CD4-positive, alpha-beta T cell (primary cell): ENCODE measurements at regions of chr2 and their contacts with region 1.

Region 1: DNA sequence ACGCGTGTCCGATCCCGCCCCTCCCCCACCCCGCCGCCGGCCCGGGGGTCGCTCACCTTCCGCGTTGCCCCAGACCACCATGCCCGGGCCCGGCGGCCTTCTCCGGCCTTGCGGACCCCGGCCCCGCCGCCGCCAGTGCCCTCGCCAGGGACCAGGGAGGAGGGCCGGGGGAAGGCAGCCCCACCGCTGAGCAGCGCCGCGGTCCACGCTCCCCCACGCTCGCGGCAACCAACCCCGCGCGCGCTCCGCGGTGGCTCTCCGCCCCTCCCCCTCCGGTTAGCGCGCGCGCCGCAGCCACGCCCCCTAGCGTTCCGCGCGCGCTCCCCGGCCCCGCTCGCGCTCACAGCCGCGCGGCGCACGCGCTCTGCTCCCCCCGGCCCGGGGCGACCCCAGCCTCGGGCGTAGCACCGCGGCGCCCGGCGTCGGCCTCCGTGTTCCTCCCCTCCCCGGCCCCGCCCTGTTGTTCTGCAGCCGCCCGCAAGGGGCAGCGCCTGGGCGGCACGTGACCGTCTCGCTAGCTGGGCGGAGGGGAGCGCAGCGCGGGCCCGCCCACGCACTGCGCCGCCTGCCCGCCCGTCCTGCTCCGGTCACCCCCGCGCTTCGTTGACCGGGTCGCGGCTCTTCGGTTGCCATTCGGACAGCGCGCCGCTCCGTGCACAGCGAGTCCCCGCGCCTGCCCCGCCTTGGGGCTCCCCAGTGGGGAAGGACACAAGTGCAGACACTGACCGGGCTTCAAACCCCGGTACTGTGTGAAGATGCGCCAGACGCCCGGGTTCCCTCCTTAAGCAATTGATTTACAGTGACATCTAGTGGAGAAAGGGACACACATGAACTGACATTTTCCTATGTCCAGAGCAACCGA is at the start of gene REV1:
- DNase-seq: peak; percentile 86 to 98 (median 93)
- ATAC-seq: peak; percentile 84
- H3K4me3 ChIP-seq: peak within 1 kb of the TSS; percentile 92
- H3K4me3 Mint-ChIP-seq: peak within 1 kb of the TSS; percentile 99
- H3K27ac ChIP-seq: peak within 1 kb of the TSS; percentile 79 to 81
- H3K27ac Mint-ChIP-seq: peak within 1 kb of the TSS; percentile 94
- H3K4me1 ChIP-seq: peaks cover 30% of the 10 kb centered on the region
- H3K4me1 Mint-ChIP-seq: peaks cover 39% of the 10 kb centered on the region
- H3K27me3 ChIP-seq: no peaks in the 10 kb centered on the region
- H3K27me3 Mint-ChIP-seq: no peaks in the 10 kb centered on the region
- CTCF ChIP-seq: peak; percentile 80
- total RNA-seq, gene REV1: 39.8 TPM

Region 2: DNA sequence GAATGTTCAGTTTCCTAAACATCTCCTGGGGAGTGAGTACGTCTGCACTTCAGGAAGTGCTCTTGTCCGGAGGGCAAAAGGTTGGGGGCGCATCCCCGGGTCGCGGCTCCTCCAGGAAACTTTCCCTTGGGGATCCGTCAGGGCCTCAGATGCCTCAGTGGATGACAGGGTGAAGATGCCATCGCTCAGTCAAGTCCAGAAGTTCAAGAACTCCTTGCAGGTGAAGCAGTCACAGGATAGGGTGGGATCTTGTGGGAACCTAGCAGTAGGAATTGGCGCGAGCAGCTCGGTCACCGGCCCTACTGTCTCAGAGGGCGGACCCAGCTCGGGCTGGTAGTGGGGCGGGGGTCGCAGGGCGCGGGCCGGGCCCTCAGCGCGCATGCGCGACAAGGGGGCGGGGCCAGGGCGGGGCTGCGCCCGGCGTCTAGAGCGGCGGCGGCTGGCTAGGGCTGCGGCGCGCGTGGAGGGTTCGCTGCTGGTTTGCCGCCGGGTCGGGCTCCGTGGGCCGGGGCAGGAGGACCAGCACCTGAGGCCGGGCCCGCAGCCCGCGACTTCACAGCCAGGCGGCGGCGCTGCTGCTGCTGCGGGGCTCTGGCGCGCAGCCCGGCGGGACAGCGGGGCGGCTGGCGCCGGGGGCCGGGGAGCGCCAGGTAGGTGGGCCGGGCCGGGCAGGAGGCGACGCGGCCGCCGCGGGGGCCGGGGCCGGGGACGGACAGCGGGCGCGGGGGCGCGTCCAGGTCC is 1045.4 kb before region 1 on chr2 and contains the start of gene INPP4A:
- CTCF ChIA-PET with region 1: no interaction called
- POLR2A ChIA-PET with region 1: no interaction called
- intact Hi-C with region 1: loop called in 1 of 2 experiments (anchors 5 kb)
- DNase-seq: peak; percentile 67 to 93 (median 77)
- ATAC-seq: peak; percentile 64
- H3K4me3 ChIP-seq: peak within 1 kb of the TSS; percentile 94
- H3K4me3 Mint-ChIP-seq: peak within 1 kb of the TSS; percentile 96
- H3K27ac ChIP-seq: peak within 1 kb of the TSS; percentile 53 to 72
- H3K27ac Mint-ChIP-seq: peak within 1 kb of the TSS; percentile 90
- H3K4me1 ChIP-seq: peaks cover 25% of the 10 kb centered on the region
- H3K4me1 Mint-ChIP-seq: peaks cover 52% of the 10 kb centered on the region
- H3K27me3 ChIP-seq: no peaks in the 10 kb centered on the region
- H3K27me3 Mint-ChIP-seq: no peaks in the 10 kb centered on the region
- CTCF ChIP-seq: no peak
- total RNA-seq, gene INPP4A: 86.4 to 89.2 TPM

Region 3: DNA sequence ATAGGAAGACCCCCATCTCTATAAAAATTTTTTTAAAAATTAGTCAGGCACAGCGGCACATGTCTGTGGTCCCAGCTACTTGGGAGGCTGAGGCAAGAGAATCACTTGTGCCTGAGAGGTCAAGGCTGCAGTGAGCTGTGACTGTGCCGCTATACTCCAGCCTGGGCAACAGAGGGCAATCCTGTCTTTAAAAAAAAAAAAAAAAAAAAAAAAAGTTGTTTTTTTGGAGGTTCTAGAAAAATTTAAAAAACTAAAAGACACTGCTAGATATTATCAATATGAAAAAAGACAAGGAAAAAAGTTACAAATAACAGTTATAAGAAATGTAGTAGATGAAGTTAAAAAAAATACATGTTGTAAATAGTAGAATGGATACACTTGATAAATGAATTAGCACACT is 404.6 kb before region 1 on chr2:
- CTCF ChIA-PET with region 1: no interaction called
- POLR2A ChIA-PET with region 1: interaction called, 4 read pairs
- intact Hi-C with region 1: loop called in 1 of 2 experiments (anchors 5 kb)
- DNase-seq: peak in 6 of 14 experiments; percentile 2 to 62 (median 16)
- ATAC-seq: no peak
- H3K4me3 ChIP-seq: no peak overlapping the region
- H3K4me3 Mint-ChIP-seq: no peak overlapping the region
- H3K27ac ChIP-seq: no peak overlapping the region
- H3K27ac Mint-ChIP-seq: no peak overlapping the region
- H3K4me1 ChIP-seq: no peaks in the 10 kb centered on the region
- H3K4me1 Mint-ChIP-seq: peaks cover 7% of the 10 kb centered on the region
- H3K27me3 ChIP-seq: no peaks in the 10 kb centered on the region
- H3K27me3 Mint-ChIP-seq: peaks cover 15% of the 10 kb centered on the region
- CTCF ChIP-seq: peak; percentile 30

Region 4: GRCh38 chr2:99180755-99181623 is 309.0 kb before region 1 on chr2 and contains the starts of genes MITD1 and MRPL30:
- CTCF ChIA-PET with region 1: no interaction called
- POLR2A ChIA-PET with region 1: interaction called, 6 read pairs
- intact Hi-C with region 1: loop called (anchors 1 to 2 kb)
- DNase-seq: peak; percentile 83 to 96 (median 87)
- ATAC-seq: peak; percentile 93
- H3K4me3 ChIP-seq: peak within 1 kb of the TSS; percentile 74
- H3K4me3 Mint-ChIP-seq: peak within 1 kb of the TSS; percentile 97
- H3K27ac ChIP-seq: peak within 1 kb of the TSS; percentile 74 to 78
- H3K27ac Mint-ChIP-seq: peak within 1 kb of the TSS; percentile 92
- H3K4me1 ChIP-seq: peaks cover 31% of the 10 kb centered on the region
- H3K4me1 Mint-ChIP-seq: peaks cover 77% of the 10 kb centered on the region
- H3K27me3 ChIP-seq: no peaks in the 10 kb centered on the region
- H3K27me3 Mint-ChIP-seq: no peaks in the 10 kb centered on the region
- CTCF ChIP-seq: no peak
- total RNA-seq, gene MITD1: 14.1 to 14.6 TPM
- total RNA-seq, gene MRPL30: 8.6 to 9.5 TPM

Region 5: GRCh38 chr2:99403524-99403923 is 86.5 kb before region 1 on chr2:
- CTCF ChIA-PET with region 1: no interaction called
- POLR2A ChIA-PET with region 1: no interaction called
- intact Hi-C with region 1: loop called in 1 of 2 experiments (anchors 5 kb)
- DNase-seq: peak in 3 of 14 experiments; percentile 4 to 38 (median 19)
- ATAC-seq: no peak
- H3K4me3 ChIP-seq: no peak overlapping the region
- H3K4me3 Mint-ChIP-seq: no peak overlapping the region
- H3K27ac ChIP-seq: no peak overlapping the region
- H3K27ac Mint-ChIP-seq: peak overlapping the region; percentile 65
- H3K4me1 ChIP-seq: no peaks in the 10 kb centered on the region
- H3K4me1 Mint-ChIP-seq: peaks cover 12% of the 10 kb centered on the region
- H3K27me3 ChIP-seq: no peaks in the 10 kb centered on the region
- H3K27me3 Mint-ChIP-seq: no peaks in the 10 kb centered on the region
- CTCF ChIP-seq: no peak

Region 6: GRCh38 chr2:100568989-100569388 is 1079.0 kb after region 1 on chr2:
- CTCF ChIA-PET with region 1: no interaction called
- POLR2A ChIA-PET with region 1: no interaction called
- intact Hi-C with region 1: loop called in 1 of 2 experiments (anchors 5 kb)
- DNase-seq: no peak
- ATAC-seq: no peak
- H3K4me3 ChIP-seq: no peak overlapping the region
- H3K4me3 Mint-ChIP-seq: no peak overlapping the region
- H3K27ac ChIP-seq: no peak overlapping the region
- H3K27ac Mint-ChIP-seq: no peak overlapping the region
- H3K4me1 ChIP-seq: peaks cover 10% of the 10 kb centered on the region
- H3K4me1 Mint-ChIP-seq: peaks cover 21% of the 10 kb centered on the region
- H3K27me3 ChIP-seq: no peaks in the 10 kb centered on the region
- H3K27me3 Mint-ChIP-seq: no peaks in the 10 kb centered on the region
- CTCF ChIP-seq: no peak